ENCODE measurements at regions of chr15 and their contacts with region 1.

Region 1: DNA sequence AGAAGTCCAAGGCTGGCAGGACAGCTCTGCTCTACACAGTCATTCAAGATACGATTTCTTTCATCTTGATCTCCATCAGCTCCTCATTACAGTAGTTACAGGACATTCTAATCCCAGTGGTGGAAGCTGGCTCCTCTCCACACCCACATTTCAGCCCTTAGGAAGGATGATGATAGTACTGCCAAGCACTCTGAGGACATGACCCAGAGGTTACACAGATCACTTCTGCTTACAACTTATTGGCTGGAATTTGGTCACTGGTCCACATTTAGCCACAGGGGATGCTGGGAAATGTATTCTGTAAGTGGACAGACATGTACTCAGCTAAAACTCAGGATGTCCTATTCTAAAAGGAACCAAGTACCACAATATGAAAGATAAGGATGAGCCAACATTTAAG is 77.1 kb downstream of the IQCH start:
- DNase-seq: no peak
- H3K4me3 ChIP-seq: no peak overlapping the region
- H3K27ac ChIP-seq: no peak overlapping the region
- H3K4me1 ChIP-seq: no peaks in the 10 kb centered on the region
- H3K27me3 ChIP-seq: peaks cover 0 to 6% of the 10 kb centered on the region in 2 experiments
- CTCF ChIP-seq: no peak
- POLR2A ChIP-seq: no peak

Region 2: DNA sequence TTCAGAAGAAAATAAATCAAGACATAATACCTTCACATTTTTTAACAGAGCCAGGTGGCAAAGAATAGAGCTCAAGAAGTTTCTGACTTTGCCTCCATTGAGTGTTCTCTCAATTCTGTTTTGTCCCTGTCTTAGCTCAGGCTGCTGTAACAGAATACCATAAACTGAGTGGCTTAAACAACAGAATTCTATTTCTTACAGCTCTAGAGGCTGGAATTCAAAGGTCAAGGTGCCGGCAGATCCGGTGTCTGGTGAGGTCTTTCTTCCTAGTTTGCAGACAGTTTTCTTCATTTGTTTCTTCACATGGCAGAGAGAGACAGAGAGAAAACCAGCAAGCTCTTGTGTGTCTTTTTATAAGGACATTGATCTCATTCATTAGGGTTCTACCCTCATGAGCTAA is 51.5 kb before region 1 on chr15:
- CTCF ChIA-PET with region 1: no interaction called
- POLR2A ChIA-PET with region 1: no interaction called
- dilution Hi-C with region 1: no loop called
- intact Hi-C with region 1: no loop called
- DNase-seq: no peak
- H3K4me3 ChIP-seq: no peak overlapping the region
- H3K27ac ChIP-seq: no peak overlapping the region
- H3K4me1 ChIP-seq: no peaks in the 10 kb centered on the region
- H3K27me3 ChIP-seq: no peaks in the 10 kb centered on the region
- CTCF ChIP-seq: no peak
- POLR2A ChIP-seq: no peak

Region 3: GRCh38 chr15:67366904-67367303 is 35.2 kb after region 1 on chr15:
- CTCF ChIA-PET with region 1: interaction called, 5 read pairs
- POLR2A ChIA-PET with region 1: no interaction called
- dilution Hi-C with region 1: no loop called
- intact Hi-C with region 1: loop called (anchors 5 kb)
- DNase-seq: no peak
- H3K4me3 ChIP-seq: no peak overlapping the region
- H3K27ac ChIP-seq: no peak overlapping the region
- H3K4me1 ChIP-seq: no peaks in the 10 kb centered on the region
- H3K27me3 ChIP-seq: peaks cover 8 to 9% of the 10 kb centered on the region in 2 experiments
- CTCF ChIP-seq: no peak
- POLR2A ChIP-seq: no peak

Region 4: DNA sequence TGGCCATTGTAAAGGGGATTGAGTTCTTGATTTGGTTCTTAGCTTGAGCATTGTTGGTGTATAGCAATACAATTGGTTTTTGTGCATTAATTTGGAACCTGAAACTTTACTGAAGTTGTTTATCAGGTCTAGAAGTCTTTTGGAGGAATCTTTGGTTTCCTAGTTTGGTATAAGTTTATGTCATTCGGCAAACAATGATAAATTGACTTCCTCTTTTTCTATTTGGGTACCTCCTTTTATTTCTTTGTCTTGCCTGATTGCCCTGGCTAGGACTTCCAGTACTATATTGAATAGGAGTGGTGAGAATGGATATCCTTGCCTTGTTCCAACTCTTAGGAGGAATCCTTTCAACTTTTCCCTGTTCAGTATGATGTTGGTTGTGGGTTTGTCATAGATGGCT is 1630.8 kb after region 1 on chr15:
- CTCF ChIA-PET with region 1: no interaction called
- POLR2A ChIA-PET with region 1: no interaction called
- dilution Hi-C with region 1: no loop called
- intact Hi-C with region 1: no loop called
- DNase-seq: no peak
- H3K4me3 ChIP-seq: no peak overlapping the region
- H3K27ac ChIP-seq: no peak overlapping the region
- H3K4me1 ChIP-seq: no peaks in the 10 kb centered on the region
- H3K27me3 ChIP-seq: peaks cover 4 to 6% of the 10 kb centered on the region in 2 experiments
- CTCF ChIP-seq: no peak
- POLR2A ChIP-seq: no peak